OCI-LY7 (cell line): ENCODE measurements at regions of chr16 and their contacts with region 1.

Region 1: DNA sequence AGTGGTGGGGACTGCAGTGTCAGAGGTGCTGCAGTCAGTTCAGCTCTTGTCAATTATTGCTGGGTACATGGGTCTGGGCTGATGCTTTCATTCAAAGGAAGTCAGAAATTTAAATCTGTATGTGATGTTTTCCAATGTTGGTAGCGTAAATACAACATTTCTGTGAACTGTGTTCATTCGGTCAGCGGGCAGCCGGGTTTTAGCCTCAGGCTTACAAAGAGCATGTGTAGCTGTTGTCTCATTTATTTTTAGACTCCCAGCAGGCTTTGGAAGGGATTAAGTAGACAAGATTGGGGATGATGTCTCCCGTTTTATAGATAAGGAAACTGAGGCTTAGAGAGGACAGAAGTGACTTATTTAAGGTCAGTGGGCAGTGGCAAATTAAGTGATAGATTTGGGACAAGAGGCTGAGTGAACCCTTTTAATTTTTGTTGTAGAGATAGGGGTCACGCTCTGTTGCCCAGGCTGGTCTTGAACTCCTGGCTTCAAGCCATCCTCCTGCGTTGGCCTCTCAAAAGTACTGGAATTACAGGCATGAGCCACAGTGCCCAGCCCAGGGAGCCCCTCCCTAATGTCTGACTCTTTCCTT is 8.1 kb downstream of the AQP8 start:
- DNase-seq: no peak
- H3K4me3 ChIP-seq: no peak overlapping the region
- H3K27ac ChIP-seq: no peak overlapping the region
- H3K4me1 ChIP-seq: no peaks in the 10 kb centered on the region
- CTCF ChIP-seq: no peak

Region 2: DNA sequence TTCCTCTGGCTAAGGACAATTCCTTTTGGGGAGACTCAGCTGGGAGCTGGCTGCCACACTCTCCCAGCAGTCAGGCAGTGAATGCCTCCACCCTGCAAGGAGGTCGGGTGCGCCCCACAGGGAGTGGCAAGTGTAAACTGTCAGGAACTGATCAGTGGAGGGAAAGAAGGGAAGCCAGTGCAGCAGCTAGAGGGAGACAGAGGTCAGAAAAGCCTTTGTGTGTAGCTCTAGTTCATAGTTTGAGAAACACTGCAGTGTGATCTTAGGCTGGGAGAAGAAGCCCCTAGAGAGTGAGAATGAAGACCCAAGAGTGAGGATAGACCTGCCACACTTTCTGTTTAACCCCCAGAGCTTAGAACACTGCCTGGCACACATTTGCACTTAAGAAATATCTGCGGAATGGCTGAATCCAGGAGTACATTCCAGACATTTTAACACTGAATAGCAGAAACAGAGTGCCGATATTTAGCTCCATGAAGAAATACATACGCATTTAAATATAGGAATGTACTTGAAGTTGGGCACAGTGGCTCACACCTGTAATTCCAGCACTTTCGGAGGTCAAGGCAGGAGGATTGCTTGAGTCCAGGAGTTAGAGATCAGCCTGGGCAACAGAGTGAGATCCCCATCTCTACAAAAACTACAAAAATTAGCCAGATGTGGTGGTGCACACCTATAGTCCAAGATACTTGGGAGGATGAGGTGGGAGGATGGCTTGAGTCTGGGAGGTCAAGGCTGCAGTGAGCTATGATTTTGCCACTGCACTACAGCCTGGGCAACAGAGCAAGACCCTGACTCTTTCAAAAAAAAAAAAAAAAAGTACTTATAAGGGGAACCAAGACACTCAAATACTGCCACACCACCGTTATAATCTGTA is 390.1 kb before region 1 on chr16:
- CTCF ChIA-PET with region 1: no interaction called
- POLR2A ChIA-PET with region 1: interaction called, 5 read pairs
- intact Hi-C with region 1: loop called (anchors 2 kb)
- DNase-seq: peak; percentile 38
- H3K4me3 ChIP-seq: no peak overlapping the region
- H3K27ac ChIP-seq: no peak overlapping the region
- H3K4me1 ChIP-seq: no peaks in the 10 kb centered on the region
- CTCF ChIP-seq: peak; percentile 67

Region 3: DNA sequence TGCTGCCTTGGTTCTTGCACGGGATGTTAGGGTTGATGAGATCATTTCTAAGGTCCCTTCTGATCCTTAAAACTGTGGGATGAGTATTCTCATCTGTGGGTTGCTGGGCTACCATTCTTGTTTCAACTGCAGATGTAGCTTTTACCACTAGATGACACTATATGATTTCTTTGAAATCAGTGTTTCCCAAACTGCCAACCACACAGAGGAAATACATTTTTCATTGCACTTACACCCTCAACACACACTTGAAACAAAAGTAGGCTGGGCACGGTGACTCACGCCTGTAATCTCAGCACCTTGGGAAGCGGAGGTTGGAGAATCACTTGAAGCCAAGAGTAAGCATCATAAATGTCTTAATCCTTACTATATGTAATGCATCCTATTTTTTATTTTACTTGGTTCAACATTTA is 98.0 kb before region 1 on chr16:
- CTCF ChIA-PET with region 1: no interaction called
- POLR2A ChIA-PET with region 1: no interaction called
- intact Hi-C with region 1: loop called (anchors 5 kb)
- DNase-seq: peak; percentile 35
- H3K4me3 ChIP-seq: no peak overlapping the region
- H3K27ac ChIP-seq: no peak overlapping the region
- H3K4me1 ChIP-seq: no peaks in the 10 kb centered on the region
- CTCF ChIP-seq: peak; percentile 82